ENCODE measurements at regions of chr12 and their contacts with region 1.

Region 1: DNA sequence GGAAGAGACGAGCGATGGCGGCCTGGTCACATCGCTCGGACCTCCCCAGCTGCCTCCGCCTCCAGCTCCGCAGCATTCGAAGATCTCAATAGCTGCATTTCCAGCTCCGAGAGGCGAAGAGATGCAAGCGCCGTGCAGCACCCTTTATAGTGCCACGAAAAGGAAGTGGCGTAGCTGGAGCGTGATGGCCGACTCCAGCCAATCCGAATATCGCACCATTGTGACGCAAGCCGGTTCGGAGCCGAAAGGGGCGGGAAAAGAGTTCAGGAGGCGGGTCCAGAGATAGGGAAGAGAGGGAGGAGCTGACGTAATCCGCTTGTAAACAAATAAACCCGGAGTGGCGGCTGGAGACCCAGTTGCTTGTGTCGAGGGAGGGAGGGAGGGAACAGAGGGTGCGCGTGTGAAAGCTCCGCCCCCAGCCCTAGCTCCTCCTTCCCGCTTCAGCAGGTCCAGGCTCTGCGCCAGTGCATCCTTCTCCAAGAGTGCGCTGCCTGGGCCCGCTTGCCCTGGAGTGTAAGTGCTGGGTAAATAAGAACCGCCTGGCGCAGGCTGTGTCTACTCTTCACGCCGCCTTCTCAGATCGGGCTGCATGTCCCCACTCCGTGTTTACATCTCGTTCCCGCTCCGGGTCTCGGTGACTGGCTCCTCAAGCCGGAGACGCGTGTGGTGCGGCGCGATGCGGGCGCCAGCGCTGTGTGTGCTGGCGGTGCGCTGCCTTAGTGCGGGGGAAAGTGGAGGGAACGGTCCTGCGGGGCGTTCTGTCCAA is at the start of gene BTG1:
- DNase-seq: peak; percentile 98 to 100 (median 100)

Region 2: GRCh38 chr12:91382081-91382543 is 763.8 kb before region 1 on chr12:
- intact Hi-C with region 1: loop called (anchors 5 kb)
- DNase-seq: peak; percentile 71 to 97 (median 92)

Region 3: DNA sequence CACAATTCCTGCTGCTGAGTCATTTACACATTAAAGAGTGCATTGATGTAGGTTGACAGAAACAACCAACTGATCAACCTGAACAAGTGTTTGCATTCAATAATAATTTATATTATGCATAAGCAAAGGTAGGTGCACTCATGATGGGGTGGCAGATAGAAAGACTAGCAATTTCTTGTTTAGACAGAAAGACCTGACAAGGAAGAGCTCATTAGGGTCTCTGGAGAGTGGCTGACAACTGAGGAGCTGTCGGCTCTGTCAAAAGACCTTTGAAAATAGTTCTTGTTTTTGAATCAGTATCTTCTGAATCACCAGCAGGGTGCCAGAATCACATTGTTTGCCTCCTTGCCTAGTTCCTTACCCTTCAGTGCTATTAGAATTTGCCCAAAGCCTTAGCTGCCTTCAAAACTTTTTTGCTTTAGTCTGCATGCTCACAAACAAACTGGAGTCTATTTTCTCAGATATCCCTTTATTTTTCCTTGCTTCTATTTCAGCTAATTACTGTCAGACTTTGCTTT is 235.0 kb before region 1 on chr12:
- intact Hi-C with region 1: no loop called
- DNase-seq: no peak

Region 4: DNA sequence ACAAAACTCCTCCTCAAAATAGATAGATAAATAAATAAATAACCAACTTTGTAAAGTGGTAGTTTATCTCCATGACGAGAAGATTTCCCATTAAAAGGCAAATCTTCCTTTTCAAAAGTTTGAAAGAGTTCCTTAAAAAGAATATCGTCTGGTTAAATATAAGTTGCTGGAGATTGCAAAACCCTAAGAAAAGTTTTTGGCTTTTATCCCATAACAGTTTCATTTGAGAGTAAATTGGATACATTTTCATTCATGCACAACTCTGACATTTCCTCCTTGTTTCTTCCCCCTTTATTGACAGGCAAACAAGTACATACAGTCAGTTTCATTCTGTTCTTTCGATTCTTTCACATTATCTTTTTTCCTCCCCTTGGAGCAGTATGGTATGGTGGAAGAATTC is 45.1 kb after region 1 on chr12:
- intact Hi-C with region 1: no loop called
- DNase-seq: no peak

Region 5: GRCh38 chr12:92289629-92290349 is 143.9 kb after region 1 on chr12:
- intact Hi-C with region 1: loop called (anchors 10 kb)
- DNase-seq: no peak

Region 6: DNA sequence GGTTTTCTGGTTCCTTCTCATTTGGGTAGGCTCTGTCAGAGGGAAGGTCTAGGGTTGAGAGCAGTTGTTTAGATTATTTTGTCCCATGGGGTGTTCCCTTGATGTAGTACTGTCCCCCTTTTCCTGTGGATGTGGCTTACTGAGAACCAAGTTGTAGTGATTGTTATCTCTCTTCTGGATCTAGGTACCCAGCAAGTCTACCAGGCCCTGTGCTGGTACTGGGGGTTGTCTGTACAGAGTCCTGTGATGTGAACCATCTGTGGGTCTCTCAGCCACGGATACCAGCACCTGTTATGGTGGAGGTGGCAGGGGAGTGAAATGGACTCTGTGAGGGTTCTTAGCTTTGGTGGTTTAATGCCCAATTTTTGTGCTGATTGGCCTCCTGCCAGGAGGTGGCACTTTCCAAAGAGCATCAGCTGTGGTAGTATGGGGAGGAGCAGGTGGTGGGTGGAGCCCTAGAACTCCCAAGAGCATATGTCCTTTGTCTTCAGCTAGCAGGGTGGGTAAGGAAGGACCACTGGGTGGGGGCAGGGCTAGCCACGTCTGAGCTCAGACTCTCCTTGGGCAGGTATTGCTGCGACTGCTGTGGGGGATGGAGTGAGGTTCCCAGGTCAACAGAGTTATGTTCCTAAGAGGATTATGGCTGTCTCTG is 179.1 kb after region 1 on chr12:
- intact Hi-C with region 1: no loop called
- DNase-seq: no peak

Region 7: GRCh38 chr12:92349635-92350034 is 203.7 kb after region 1 on chr12:
- intact Hi-C with region 1: no loop called
- DNase-seq: no peak

Region 8: GRCh38 chr12:92505254-92506231 is 359.6 kb after region 1 on chr12:
- intact Hi-C with region 1: loop called (anchors 10 kb)
- DNase-seq: peak in 39 of 42 donors; percentile 12 to 75 (median 47)

Region 9: DNA sequence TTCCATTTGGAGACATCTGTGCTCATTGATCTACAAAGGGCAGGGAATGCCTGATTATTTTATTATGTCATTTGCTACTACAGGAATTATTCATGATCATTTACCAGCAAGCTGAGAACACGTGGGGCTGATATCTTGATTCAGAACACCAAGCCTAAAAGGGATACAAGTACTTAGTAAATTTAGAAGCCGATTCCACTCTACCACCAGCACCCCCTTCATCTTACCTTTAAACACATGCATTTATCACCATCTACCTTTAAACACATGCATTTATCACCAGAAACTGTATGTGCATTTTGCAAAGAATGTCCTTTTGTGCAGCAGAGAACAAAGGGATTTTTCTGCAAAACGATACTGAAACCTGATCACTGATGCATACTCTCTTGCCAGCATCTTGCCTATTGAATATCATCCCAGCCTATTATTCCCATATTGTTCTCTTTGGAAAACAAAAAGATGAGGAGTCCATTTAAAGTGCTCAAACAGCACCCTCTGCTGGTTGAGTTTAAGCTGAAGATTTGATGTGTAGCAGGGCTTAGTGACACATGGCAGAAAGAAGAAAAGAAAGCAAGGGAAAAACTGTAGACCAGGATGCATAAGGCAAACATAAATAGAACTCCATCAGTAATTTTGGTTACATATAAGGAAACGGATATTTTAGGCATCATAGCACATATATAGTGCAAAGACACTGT is 424.3 kb after region 1 on chr12:
- intact Hi-C with region 1: loop called (anchors 10 kb)
- DNase-seq: peak in 36 of 42 donors; percentile 14 to 92 (median 69)

Measured in head of caudate nucleus (tissue), 42 donors.